CD8-positive, alpha-beta T cell (primary cell): ENCODE measurements at regions of chr6 and their contacts with region 1.

Region 1: GRCh38 chr6:42563697-42564505 is at the start of gene UBR2:
- DNase-seq: peak; percentile 82 to 98 (median 91)
- ATAC-seq: peak; percentile 95
- H3K4me3 ChIP-seq: peak within 1 kb of the TSS; percentile 95 to 99
- H3K4me3 Mint-ChIP-seq: peak within 1 kb of the TSS; percentile 93
- H3K27ac ChIP-seq: peak within 1 kb of the TSS; percentile 91 to 96
- H3K27ac Mint-ChIP-seq: peak within 1 kb of the TSS; percentile 94
- H3K4me1 ChIP-seq: peaks cover 25% of the 10 kb centered on the region
- H3K4me1 Mint-ChIP-seq: peaks cover 35% of the 10 kb centered on the region
- H3K27me3 ChIP-seq: no peaks in the 10 kb centered on the region
- H3K27me3 Mint-ChIP-seq: peaks cover 2% of the 10 kb centered on the region
- CTCF ChIP-seq: peak; percentile 27
- total RNA-seq, gene UBR2: 22.0 to 22.8 TPM

Region 2: GRCh38 chr6:41602864-41603608 is 960.9 kb before region 1 on chr6:
- CTCF ChIA-PET with region 1: no interaction called
- POLR2A ChIA-PET with region 1: no interaction called
- intact Hi-C with region 1: loop called in 1 of 2 experiments (anchors 10 kb)
- DNase-seq: peak; percentile 45 to 87 (median 74)
- ATAC-seq: peak; percentile 81
- H3K4me3 ChIP-seq: no peak overlapping the region
- H3K4me3 Mint-ChIP-seq: no peak overlapping the region
- H3K27ac ChIP-seq: no peak overlapping the region
- H3K27ac Mint-ChIP-seq: no peak overlapping the region
- H3K4me1 ChIP-seq: no peaks in the 10 kb centered on the region
- H3K4me1 Mint-ChIP-seq: peaks cover 5% of the 10 kb centered on the region
- H3K27me3 ChIP-seq: peaks cover 0 to 4% of the 10 kb centered on the region in 2 experiments
- H3K27me3 Mint-ChIP-seq: peaks cover 12% of the 10 kb centered on the region
- CTCF ChIP-seq: peak; percentile 62

Region 3: GRCh38 chr6:41920921-41921711 is 642.8 kb before region 1 on chr6 and contains the starts of genes BYSL and MED20:
- CTCF ChIA-PET with region 1: no interaction called
- POLR2A ChIA-PET with region 1: no interaction called
- intact Hi-C with region 1: loop called in 1 of 2 experiments (anchors 1 kb)
- DNase-seq: peak; percentile 86 to 98 (median 94)
- ATAC-seq: peak; percentile 92
- H3K4me3 ChIP-seq: peak within 1 kb of the TSS; percentile 96 to 97
- H3K4me3 Mint-ChIP-seq: peak within 1 kb of the TSS; percentile 100
- H3K27ac ChIP-seq: peak within 1 kb of the TSS; percentile 83 to 99
- H3K27ac Mint-ChIP-seq: peak within 1 kb of the TSS; percentile 100
- H3K4me1 ChIP-seq: peaks cover 32% of the 10 kb centered on the region
- H3K4me1 Mint-ChIP-seq: peaks cover 53% of the 10 kb centered on the region
- H3K27me3 ChIP-seq: no peaks in the 10 kb centered on the region
- H3K27me3 Mint-ChIP-seq: no peaks in the 10 kb centered on the region
- CTCF ChIP-seq: peak; percentile 97
- total RNA-seq, gene BYSL: 3.2 to 6.2 TPM
- total RNA-seq, gene MED20: 1.8 TPM

Region 4: DNA sequence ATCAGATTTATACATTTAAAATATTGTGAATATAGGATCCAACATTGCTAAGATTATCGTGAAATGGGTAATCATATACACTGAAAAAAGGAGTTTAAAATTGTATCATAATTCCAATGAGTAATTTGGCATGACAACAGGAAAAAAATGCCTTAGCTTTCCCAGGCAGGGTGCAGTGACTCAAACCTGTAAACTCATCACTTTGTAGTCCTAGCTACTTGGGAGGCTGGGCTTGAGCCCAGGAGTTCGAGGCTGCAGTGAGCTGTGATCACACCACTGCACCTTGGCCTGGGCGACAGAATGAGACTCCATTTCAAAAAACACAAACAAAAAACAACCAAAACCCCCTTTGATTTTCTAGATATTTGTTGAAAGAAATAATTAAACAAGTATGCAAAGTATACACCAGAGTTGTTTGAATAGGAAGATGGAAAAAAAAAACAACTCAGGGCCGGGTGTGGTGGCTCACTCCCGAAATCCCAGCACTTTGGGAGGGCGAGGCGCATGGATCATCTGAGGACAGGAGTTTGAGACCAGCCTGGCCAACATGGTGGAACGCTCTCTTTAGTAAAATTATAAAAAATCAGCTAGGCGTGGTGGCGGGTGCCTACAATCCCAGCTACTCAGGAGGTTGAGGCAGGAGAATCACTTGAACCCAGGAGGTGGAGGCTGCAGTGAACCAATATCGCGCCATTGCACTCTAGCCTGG is 210.9 kb before region 1 on chr6:
- CTCF ChIA-PET with region 1: no interaction called
- POLR2A ChIA-PET with region 1: no interaction called
- intact Hi-C with region 1: no loop called
- DNase-seq: no peak
- ATAC-seq: no peak
- H3K4me3 ChIP-seq: no peak overlapping the region
- H3K4me3 Mint-ChIP-seq: no peak overlapping the region
- H3K27ac ChIP-seq: no peak overlapping the region
- H3K27ac Mint-ChIP-seq: no peak overlapping the region
- H3K4me1 ChIP-seq: no peaks in the 10 kb centered on the region
- H3K4me1 Mint-ChIP-seq: peaks cover 18% of the 10 kb centered on the region
- H3K27me3 ChIP-seq: no peaks in the 10 kb centered on the region
- H3K27me3 Mint-ChIP-seq: no peaks in the 10 kb centered on the region
- CTCF ChIP-seq: no peak

Region 5: GRCh38 chr6:42547407-42548329 is 16.2 kb before region 1 on chr6:
- CTCF ChIA-PET with region 1: interaction called, 30 read pairs
- POLR2A ChIA-PET with region 1: interaction called, 9 read pairs
- intact Hi-C with region 1: loop called in 1 of 2 experiments (anchors 1 kb)
- DNase-seq: peak; percentile 76 to 94 (median 85)
- ATAC-seq: peak; percentile 99
- H3K4me3 ChIP-seq: peak overlapping the region; percentile 19 to 36
- H3K4me3 Mint-ChIP-seq: peak overlapping the region; percentile 67
- H3K27ac ChIP-seq: no peak overlapping the region
- H3K27ac Mint-ChIP-seq: no peak overlapping the region
- H3K4me1 ChIP-seq: peaks cover 3% of the 10 kb centered on the region
- H3K4me1 Mint-ChIP-seq: peaks cover 11% of the 10 kb centered on the region
- H3K27me3 ChIP-seq: no peaks in the 10 kb centered on the region
- H3K27me3 Mint-ChIP-seq: peaks cover 3% of the 10 kb centered on the region
- CTCF ChIP-seq: peak; percentile 96

Region 6: GRCh38 chr6:42928986-42929820 is 365.3 kb after region 1 on chr6 and contains the start of gene CNPY3:
- CTCF ChIA-PET with region 1: no interaction called
- POLR2A ChIA-PET with region 1: interaction called, 5 read pairs
- intact Hi-C with region 1: loop called in 1 of 2 experiments (anchors 1 kb)
- DNase-seq: peak; percentile 91 to 98 (median 94)
- ATAC-seq: peak; percentile 77
- H3K4me3 ChIP-seq: peak within 1 kb of the TSS; percentile 70 to 82
- H3K4me3 Mint-ChIP-seq: peak within 1 kb of the TSS; percentile 99
- H3K27ac ChIP-seq: peak within 1 kb of the TSS; percentile 93 to 95
- H3K27ac Mint-ChIP-seq: peak within 1 kb of the TSS; percentile 98
- H3K4me1 ChIP-seq: peaks cover 43% of the 10 kb centered on the region
- H3K4me1 Mint-ChIP-seq: peaks cover 45% of the 10 kb centered on the region
- H3K27me3 ChIP-seq: no peaks in the 10 kb centered on the region
- H3K27me3 Mint-ChIP-seq: no peaks in the 10 kb centered on the region
- CTCF ChIP-seq: no peak
- total RNA-seq, gene CNPY3: 43.9 to 47.4 TPM

Region 7: DNA sequence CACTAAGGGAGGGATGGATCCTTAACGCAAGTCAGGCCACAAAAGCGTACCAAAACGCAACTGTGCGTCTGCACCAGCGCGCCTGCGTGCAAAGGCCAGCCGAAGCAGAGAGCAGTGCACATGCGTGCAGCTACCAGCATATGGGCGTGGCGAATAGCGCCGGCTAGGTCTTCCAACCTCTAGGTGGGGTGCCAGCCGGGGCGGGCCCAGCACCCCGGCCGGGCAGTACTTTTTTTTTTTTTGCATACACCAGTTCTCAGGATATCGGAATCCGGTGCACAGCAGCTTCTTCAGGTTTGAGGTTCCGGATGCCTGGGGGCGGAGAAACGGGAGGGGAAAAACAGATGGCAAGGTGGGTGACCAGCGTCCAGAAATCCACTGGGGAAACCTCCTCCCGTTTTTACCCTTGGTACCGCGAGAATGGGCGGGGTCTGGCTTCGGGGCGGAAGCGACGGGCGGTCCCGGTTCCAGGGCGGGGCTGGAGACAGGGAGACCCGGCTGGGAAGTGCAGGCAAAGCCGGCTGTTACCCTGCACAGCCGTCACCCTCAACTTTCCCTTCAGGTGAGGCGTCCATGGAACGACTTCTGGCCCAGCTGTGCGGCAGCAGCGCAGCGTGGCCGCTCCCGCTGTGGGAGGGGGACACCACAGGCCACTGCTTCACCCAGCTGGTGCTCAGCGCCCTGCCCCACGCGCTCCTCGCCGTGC is 863.7 kb after region 1 on chr6 and contains the start of gene ABCC10:
- CTCF ChIA-PET with region 1: no interaction called
- POLR2A ChIA-PET with region 1: no interaction called
- intact Hi-C with region 1: loop called in 1 of 2 experiments (anchors 5 kb)
- DNase-seq: peak; percentile 89 to 98 (median 94)
- ATAC-seq: peak; percentile 94
- H3K4me3 ChIP-seq: peak within 1 kb of the TSS; percentile 78 to 91
- H3K4me3 Mint-ChIP-seq: peak within 1 kb of the TSS; percentile 94
- H3K27ac ChIP-seq: peak within 1 kb of the TSS; percentile 80 to 84
- H3K27ac Mint-ChIP-seq: peak within 1 kb of the TSS; percentile 98
- H3K4me1 ChIP-seq: peaks cover 11% of the 10 kb centered on the region
- H3K4me1 Mint-ChIP-seq: peaks cover 30% of the 10 kb centered on the region
- H3K27me3 ChIP-seq: no peaks in the 10 kb centered on the region
- H3K27me3 Mint-ChIP-seq: no peaks in the 10 kb centered on the region
- CTCF ChIP-seq: no peak
- total RNA-seq, gene ABCC10: 39.7 to 45.5 TPM